Sigmoid colon (tissue), 7 donors: ENCODE measurements at regions of chr19 and their contacts with region 1.

Region 1: GRCh38 chr19:43080186-43080585 is 2.3 kb downstream of the PSG2 start:
- DNase-seq: no peak
- H3K4me3 ChIP-seq: no peak overlapping the region
- H3K27ac ChIP-seq: no peak overlapping the region
- H3K4me1 ChIP-seq: peaks cover 0 to 11% (median 7%) of the 10 kb centered on the region in 4 donors
- H3K27me3 ChIP-seq: no peaks in the 10 kb centered on the region
- CTCF ChIP-seq: no peak
- EP300 ChIP-seq: no peak
- POLR2A ChIP-seq: no peak

Region 2: GRCh38 chr19:42926781-42927180 is 153.4 kb before region 1 on chr19:
- intact Hi-C with region 1: loop called (anchors 10 kb)
- DNase-seq: no peak
- H3K4me3 ChIP-seq: no peak overlapping the region
- H3K27ac ChIP-seq: no peak overlapping the region
- H3K4me1 ChIP-seq: no peaks in the 10 kb centered on the region
- H3K27me3 ChIP-seq: no peaks in the 10 kb centered on the region
- CTCF ChIP-seq: no peak
- EP300 ChIP-seq: no peak
- POLR2A ChIP-seq: no peak

Region 3: GRCh38 chr19:43191191-43191590 is 111.0 kb after region 1 on chr19:
- intact Hi-C with region 1: no loop called
- DNase-seq: no peak
- H3K4me3 ChIP-seq: no peak overlapping the region
- H3K27ac ChIP-seq: no peak overlapping the region
- H3K4me1 ChIP-seq: no peaks in the 10 kb centered on the region
- H3K27me3 ChIP-seq: no peaks in the 10 kb centered on the region
- CTCF ChIP-seq: no peak
- EP300 ChIP-seq: no peak
- POLR2A ChIP-seq: no peak

Region 4: GRCh38 chr19:43207991-43208390 is 127.8 kb after region 1 on chr19:
- intact Hi-C with region 1: no loop called
- DNase-seq: no peak
- H3K4me3 ChIP-seq: no peak overlapping the region
- H3K27ac ChIP-seq: no peak overlapping the region
- H3K4me1 ChIP-seq: peaks cover 0 to 4% (median 0%) of the 10 kb centered on the region in 4 donors
- H3K27me3 ChIP-seq: no peaks in the 10 kb centered on the region
- CTCF ChIP-seq: no peak
- EP300 ChIP-seq: no peak
- POLR2A ChIP-seq: no peak